H1 (cell line): ENCODE measurements at regions of chr11 and their contacts with region 1.

Region 1: GRCh38 chr11:6362873-6363678 is 27.2 kb upstream of the SMPD1 start:
- DNase-seq: peak; percentile 73 to 87
- H3K4me3 ChIP-seq: no peak overlapping the region
- H3K27ac ChIP-seq: no peak overlapping the region
- H3K4me1 ChIP-seq: peaks cover 0 to 4% (median 0%) of the 10 kb centered on the region in 4 experiments; a peak in 1 of 7 replicates
- H3K27me3 ChIP-seq: no peaks in the 10 kb centered on the region
- CTCF ChIP-seq: peak; percentile 97 to 99 (median 99)
- EP300 ChIP-seq: no peak
- POLR2A ChIP-seq: no peak
- RAD21 ChIP-seq: peak; percentile 96 to 98

Region 2: GRCh38 chr11:5992604-5993251 is 370.3 kb before region 1 on chr11:
- CTCF ChIA-PET with region 1: interaction called, 20 read pairs
- POLR2A ChIA-PET with region 1: no interaction called
- DNase-seq: no peak
- H3K4me3 ChIP-seq: no peak overlapping the region
- H3K27ac ChIP-seq: no peak overlapping the region
- H3K4me1 ChIP-seq: no peaks in the 10 kb centered on the region
- H3K27me3 ChIP-seq: no peaks in the 10 kb centered on the region
- CTCF ChIP-seq: peak in 2 of 3 experiments; percentile 55 to 74; a peak in 3 of 4 replicates
- EP300 ChIP-seq: no peak
- POLR2A ChIP-seq: no peak
- RAD21 ChIP-seq: peak; percentile 55 to 63

Region 3: DNA sequence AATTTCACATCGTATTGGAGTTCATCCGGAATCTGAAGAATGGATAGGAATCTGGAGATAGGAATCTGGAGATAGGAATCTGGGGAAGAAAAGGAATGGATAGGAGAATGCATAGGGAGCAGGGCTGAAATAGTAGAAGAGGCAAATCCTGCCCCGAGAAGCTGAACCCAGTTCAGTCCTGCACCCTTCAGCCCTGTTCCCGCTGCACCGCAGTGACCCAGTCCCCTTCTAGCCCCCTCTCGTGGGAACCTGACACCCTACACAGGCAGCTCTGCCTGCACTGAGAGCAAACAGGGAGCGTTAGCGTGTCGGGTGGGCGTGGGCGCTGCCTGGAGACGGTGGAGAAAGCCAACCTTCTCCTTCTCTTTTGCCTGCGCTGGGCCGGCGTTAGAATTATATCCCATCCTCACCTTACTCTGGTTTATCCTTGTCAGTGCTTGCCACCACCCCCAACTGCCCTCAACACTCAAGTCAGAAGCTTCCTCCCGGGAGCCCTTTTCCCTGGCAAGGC is 104.5 kb before region 1 on chr11:
- CTCF ChIA-PET with region 1: interaction called, 26 read pairs
- POLR2A ChIA-PET with region 1: no interaction called
- DNase-seq: no peak
- H3K4me3 ChIP-seq: peak overlapping the region; percentile 22 to 72 (median 46); a peak in 7 of 8 replicates
- H3K27ac ChIP-seq: no peak overlapping the region
- H3K4me1 ChIP-seq: peaks cover 0 to 18% (median 9%) of the 10 kb centered on the region in 4 experiments; a peak in 6 of 7 replicates
- H3K27me3 ChIP-seq: peaks cover 16 to 58% (median 38%) of the 10 kb centered on the region in 4 experiments
- CTCF ChIP-seq: peak; percentile 3 to 19 (median 17)
- EP300 ChIP-seq: no peak
- POLR2A ChIP-seq: no peak
- RAD21 ChIP-seq: no peak

Region 4: DNA sequence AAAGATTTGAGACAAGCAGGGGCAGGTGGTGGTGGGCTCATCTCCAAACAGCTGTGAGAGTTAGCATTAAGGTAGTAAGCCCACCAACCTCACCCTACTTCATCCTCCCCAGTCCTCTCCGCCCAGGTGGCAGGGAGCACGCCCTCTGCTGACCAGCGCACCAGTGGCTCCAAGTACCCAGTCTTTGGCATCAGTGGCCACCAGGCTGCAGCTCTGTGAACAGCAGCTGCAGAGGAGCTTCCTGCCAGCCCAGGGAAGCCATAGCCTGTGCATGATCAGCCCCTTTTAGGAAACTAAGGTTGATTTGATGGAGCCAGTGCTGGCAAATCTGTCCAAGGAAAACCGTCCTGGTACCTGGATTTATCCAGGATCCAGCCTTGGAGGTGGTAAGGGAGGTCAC is 64.5 kb before region 1 on chr11:
- CTCF ChIA-PET with region 1: interaction called, 19 read pairs
- POLR2A ChIA-PET with region 1: no interaction called
- DNase-seq: peak in 1 of 2 experiments; percentile 81
- H3K4me3 ChIP-seq: no peak overlapping the region
- H3K27ac ChIP-seq: no peak overlapping the region
- H3K4me1 ChIP-seq: peaks cover 1 to 7% (median 2%) of the 10 kb centered on the region in 4 experiments; a peak in 5 of 7 replicates
- H3K27me3 ChIP-seq: no peaks in the 10 kb centered on the region; a peak in 1 of 7 replicates
- CTCF ChIP-seq: peak; percentile 100
- EP300 ChIP-seq: no peak
- POLR2A ChIP-seq: no peak
- RAD21 ChIP-seq: peak; percentile 72 to 86

Region 5: GRCh38 chr11:6345366-6345765 is 17.7 kb before region 1 on chr11:
- CTCF ChIA-PET with region 1: interaction called, 98 read pairs
- POLR2A ChIA-PET with region 1: no interaction called
- DNase-seq: no peak
- H3K4me3 ChIP-seq: no peak overlapping the region
- H3K27ac ChIP-seq: no peak overlapping the region
- H3K4me1 ChIP-seq: no peaks in the 10 kb centered on the region
- H3K27me3 ChIP-seq: no peaks in the 10 kb centered on the region
- CTCF ChIP-seq: no peak
- EP300 ChIP-seq: no peak
- POLR2A ChIP-seq: no peak
- RAD21 ChIP-seq: no peak

Region 6: GRCh38 chr11:6411594-6412031 is 48.5 kb after region 1 on chr11:
- CTCF ChIA-PET with region 1: interaction called, 12 read pairs
- POLR2A ChIA-PET with region 1: no interaction called
- DNase-seq: no peak
- H3K4me3 ChIP-seq: no peak overlapping the region
- H3K27ac ChIP-seq: no peak overlapping the region
- H3K4me1 ChIP-seq: no peaks in the 10 kb centered on the region
- H3K27me3 ChIP-seq: no peaks in the 10 kb centered on the region
- CTCF ChIP-seq: no peak
- EP300 ChIP-seq: no peak
- POLR2A ChIP-seq: no peak
- RAD21 ChIP-seq: no peak